ENCODE measurements at regions of chr6 and their contacts with region 1.

Region 1: GRCh38 chr6:408599-409102 is 17.1 kb downstream of the IRF4 start:
- DNase-seq: peak; percentile 54
- ATAC-seq: peak; percentile 99
- H3K4me3 Mint-ChIP-seq: no peak overlapping the region
- H3K27ac Mint-ChIP-seq: no peak overlapping the region
- H3K4me1 Mint-ChIP-seq: peaks cover 24% of the 10 kb centered on the region
- H3K27me3 Mint-ChIP-seq: no peaks in the 10 kb centered on the region
- CTCF ChIP-seq: no peak; the same call in 1 of the 2 replicates

Region 2: DNA sequence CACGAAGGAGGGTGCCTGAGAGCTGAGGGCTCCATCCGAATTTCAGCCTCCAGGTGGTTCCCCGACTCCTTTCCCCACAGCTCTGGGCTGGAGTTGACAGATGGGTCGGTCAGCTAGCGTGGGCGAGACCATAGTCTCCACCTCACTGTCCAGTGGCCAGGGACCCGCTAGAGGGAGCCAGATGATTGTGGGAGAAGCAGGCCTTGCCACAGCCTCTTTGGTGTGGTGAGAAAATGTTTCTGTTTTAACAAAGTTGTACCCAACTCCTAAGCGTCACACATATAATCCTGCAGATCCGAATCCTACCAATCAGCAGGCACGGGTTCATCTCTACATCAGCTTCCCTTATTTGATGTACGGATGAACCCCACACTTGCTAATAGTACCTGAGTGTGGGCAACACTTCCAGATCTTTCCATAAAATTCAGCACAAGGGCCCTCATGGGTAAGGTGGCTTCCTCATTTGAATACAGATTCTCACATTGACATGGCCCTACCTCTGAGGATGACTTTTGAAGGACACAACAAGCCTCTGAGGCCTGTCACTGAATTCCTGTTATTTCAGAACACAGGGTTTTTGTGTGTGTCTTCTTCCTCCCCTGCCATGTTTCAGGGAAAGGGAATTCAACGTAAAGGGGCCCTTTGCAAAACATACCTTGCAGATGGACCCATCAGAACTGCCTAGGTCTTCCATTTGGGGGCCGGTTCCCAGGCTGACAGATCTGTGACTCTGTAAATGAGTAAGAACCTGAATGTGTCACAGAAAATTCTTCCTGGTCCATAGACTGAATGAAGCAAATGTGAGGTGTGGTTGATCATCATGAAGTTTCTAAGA is 219.6 kb before region 1 on chr6:
- CTCF ChIA-PET with region 1: interaction called, 21 read pairs
- POLR2A ChIA-PET with region 1: no interaction called
- DNase-seq: peak; percentile 91
- ATAC-seq: peak; percentile 99
- H3K4me3 Mint-ChIP-seq: no peak overlapping the region
- H3K27ac Mint-ChIP-seq: no peak overlapping the region
- H3K4me1 Mint-ChIP-seq: no peaks in the 10 kb centered on the region
- H3K27me3 Mint-ChIP-seq: no peaks in the 10 kb centered on the region
- CTCF ChIP-seq: peak; percentile 56

Region 3: DNA sequence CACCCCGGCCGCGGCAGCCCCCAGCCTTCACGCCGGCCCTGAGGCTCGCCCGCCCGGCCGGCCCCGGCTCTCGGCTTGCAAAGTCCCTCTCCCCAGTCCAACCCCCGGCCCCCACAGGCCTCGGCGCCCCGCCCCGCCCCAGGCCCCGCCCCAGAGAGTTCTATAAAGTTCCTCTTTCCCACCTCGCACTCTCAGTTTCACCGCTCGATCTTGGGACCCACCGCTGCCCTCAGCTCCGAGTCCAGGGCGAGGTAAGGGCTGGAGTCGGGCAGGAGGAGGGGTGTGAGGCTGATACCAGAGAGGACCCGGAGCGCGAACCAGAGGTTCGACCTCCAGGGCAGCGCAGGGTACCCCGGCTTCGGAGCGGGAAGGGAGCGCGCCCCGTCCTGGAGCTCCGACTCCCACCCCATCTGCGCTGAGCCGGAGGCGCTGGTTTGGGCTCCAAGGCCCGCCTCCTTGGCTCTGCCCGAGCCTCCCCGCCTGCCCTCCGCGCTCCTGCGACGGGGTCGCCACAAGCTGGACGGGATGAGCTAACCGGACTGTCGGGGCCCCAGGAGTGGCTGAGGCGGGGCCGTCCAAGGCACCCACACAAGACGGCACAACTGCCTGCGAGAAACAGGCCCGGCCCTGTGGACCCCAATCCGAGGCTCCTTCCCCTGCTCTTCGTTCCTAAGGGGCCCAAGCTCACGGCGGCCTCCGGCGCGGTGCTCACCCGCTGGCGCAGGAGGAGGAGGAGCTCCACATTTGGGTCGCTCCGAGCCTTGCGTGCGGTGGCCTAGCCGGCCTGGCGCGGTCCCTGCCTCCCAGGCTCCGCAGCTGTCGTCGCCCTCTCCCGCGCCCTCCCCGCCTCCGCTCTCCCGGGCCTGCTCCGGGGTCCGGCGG is 16.9 kb before region 1 on chr6 and contains the start of gene IRF4:
- CTCF ChIA-PET with region 1: interaction called, 13 read pairs
- POLR2A ChIA-PET with region 1: interaction called, 3 read pairs
- DNase-seq: peak; percentile 55
- ATAC-seq: peak; percentile 60
- H3K4me3 Mint-ChIP-seq: peak within 1 kb of the TSS; percentile 77
- H3K27ac Mint-ChIP-seq: no peak within 1 kb of the TSS
- H3K4me1 Mint-ChIP-seq: peaks cover 9% of the 10 kb centered on the region
- H3K27me3 Mint-ChIP-seq: peaks cover 90% of the 10 kb centered on the region
- CTCF ChIP-seq: no peak
- total RNA-seq, gene IRF4: 1.6 to 2.2 TPM (median 2.2 TPM) in 3 replicates

Region 4: GRCh38 chr6:398558-399078 is 10.0 kb before region 1 on chr6:
- CTCF ChIA-PET with region 1: interaction called, 12 read pairs
- POLR2A ChIA-PET with region 1: no interaction called
- DNase-seq: no peak
- ATAC-seq: no peak
- H3K4me3 Mint-ChIP-seq: no peak overlapping the region
- H3K27ac Mint-ChIP-seq: no peak overlapping the region
- H3K4me1 Mint-ChIP-seq: peaks cover 6% of the 10 kb centered on the region
- H3K27me3 Mint-ChIP-seq: peaks cover 27% of the 10 kb centered on the region
- CTCF ChIP-seq: no peak

Region 5: GRCh38 chr6:484086-484745 is 75.6 kb after region 1 on chr6:
- CTCF ChIA-PET with region 1: no interaction called
- POLR2A ChIA-PET with region 1: no interaction called
- DNase-seq: no peak
- ATAC-seq: no peak
- H3K4me3 Mint-ChIP-seq: no peak overlapping the region
- H3K27ac Mint-ChIP-seq: no peak overlapping the region
- H3K4me1 Mint-ChIP-seq: no peaks in the 10 kb centered on the region
- H3K27me3 Mint-ChIP-seq: peaks cover 10% of the 10 kb centered on the region
- CTCF ChIP-seq: no peak